ENCODE measurements at regions of chr9 and their contacts with region 1.

Region 1: DNA sequence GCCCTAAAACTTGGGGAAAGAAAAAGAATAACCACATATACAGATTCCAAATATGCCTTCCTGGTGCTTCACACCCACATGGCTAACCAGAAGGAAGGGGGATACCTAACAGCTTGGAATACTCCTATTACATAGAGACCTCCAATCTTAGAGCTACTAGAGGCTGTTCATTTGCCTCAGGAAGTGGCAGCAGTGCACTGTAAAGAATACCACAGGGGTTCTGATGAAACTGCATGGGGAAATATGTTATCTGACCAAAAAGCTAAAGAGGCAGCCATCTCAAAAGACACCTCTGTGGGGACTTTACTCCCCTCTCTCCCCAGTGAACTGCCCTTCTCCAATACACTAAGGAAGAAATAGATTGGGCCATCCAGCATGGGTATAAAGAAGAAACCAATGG is 66.4 kb downstream of the CDKN2A start:
- DNase-seq: no peak
- H3K4me3 ChIP-seq: no peak overlapping the region
- H3K27ac ChIP-seq: no peak overlapping the region
- H3K4me1 ChIP-seq: no peaks in the 10 kb centered on the region
- H3K27me3 ChIP-seq: no peaks in the 10 kb centered on the region
- CTCF ChIP-seq: no peak

Region 2: DNA sequence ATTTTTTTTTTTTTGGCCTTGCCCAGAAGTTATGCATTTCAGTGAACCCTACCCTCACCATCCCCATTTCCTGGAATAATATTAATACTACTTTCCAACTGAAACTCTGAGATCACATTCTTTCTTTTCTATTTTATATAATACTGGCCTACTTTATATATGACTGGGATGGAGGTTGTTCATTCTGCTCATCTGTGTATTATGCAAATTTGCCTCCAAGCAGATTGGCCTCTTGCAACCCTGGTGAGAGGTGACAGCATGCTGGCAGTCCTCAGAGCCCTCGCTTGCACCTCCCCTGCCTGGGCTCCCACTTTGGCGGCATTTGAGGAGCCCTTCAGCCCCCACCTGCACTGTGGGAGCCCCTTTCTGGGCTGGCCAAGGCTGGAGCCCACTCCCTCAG is 31.1 kb after region 1 on chr9:
- intact Hi-C with region 1: loop called (anchors 2 kb)
- DNase-seq: no peak
- H3K4me3 ChIP-seq: no peak overlapping the region
- H3K27ac ChIP-seq: no peak overlapping the region
- H3K4me1 ChIP-seq: no peaks in the 10 kb centered on the region
- H3K27me3 ChIP-seq: peaks cover 0 to 9% of the 10 kb centered on the region in 2 donors
- CTCF ChIP-seq: no peak

Region 3: GRCh38 chr9:22030101-22030598 is 102.4 kb after region 1 on chr9:
- intact Hi-C with region 1: no loop called
- DNase-seq: no peak
- H3K4me3 ChIP-seq: no peak overlapping the region
- H3K27ac ChIP-seq: no peak overlapping the region
- H3K4me1 ChIP-seq: no peaks in the 10 kb centered on the region
- H3K27me3 ChIP-seq: no peaks in the 10 kb centered on the region
- CTCF ChIP-seq: no peak

Region 4: GRCh38 chr9:22279621-22280020 is 351.9 kb after region 1 on chr9:
- intact Hi-C with region 1: loop called (anchors 5 kb)
- DNase-seq: no peak
- H3K4me3 ChIP-seq: no peak overlapping the region
- H3K27ac ChIP-seq: no peak overlapping the region
- H3K4me1 ChIP-seq: no peaks in the 10 kb centered on the region
- H3K27me3 ChIP-seq: no peaks in the 10 kb centered on the region
- CTCF ChIP-seq: no peak

Measured in tibial artery (tissue), 4 donors.